MCF 10A (cell line): ENCODE measurements at regions of chr15 and their contacts with region 1.

Region 1: DNA sequence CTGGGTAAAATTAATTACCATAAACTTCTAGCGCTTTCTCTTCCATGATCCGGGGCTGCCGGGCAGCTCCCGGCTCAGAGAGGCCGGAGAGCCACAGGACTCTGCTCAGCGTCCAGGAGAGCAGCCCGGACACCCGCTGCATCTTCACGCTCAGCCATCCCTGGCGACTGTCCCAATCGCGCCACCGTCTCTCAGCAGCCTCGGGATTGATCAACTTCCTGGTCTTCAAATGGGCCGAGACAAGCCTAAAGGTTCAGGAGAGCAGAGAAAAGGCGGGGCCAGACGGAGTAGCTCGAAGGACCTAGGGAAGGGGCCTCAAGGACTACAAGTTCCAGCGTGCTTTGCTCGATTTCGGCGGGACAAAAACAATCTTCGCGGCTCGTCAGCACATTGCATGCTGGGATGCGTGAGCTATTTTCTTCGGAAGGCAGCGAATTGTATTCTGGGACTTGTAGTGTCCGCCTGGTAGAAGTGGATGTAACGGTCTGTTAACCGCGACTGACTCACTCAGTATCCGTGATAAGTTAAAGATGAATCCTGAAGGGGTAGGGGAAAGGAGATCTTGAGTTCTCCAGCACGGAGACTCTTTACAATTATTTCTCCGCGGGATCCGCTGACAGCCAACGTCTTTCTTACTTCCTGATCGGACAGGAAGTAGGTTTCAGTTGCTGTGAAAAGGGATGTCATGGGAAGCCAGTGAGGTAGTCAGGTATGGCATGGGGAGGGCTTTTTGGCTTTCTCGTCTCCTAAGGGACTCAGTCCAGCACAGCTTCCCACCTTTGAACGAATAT is at the start of gene CIAO2A:
- DNase-seq: peak; percentile 99
- H3K4me3 Mint-ChIP-seq: peak within 1 kb of the TSS; percentile 92
- H3K27ac Mint-ChIP-seq: peak within 1 kb of the TSS; percentile 96
- H3K4me1 Mint-ChIP-seq: peaks cover 30% of the 10 kb centered on the region
- H3K27me3 Mint-ChIP-seq: no peaks in the 10 kb centered on the region
- CTCF ChIP-seq: no peak
- total RNA-seq, gene CIAO2A: 38.7 and 44.7 TPM in 2 replicates

Region 2: DNA sequence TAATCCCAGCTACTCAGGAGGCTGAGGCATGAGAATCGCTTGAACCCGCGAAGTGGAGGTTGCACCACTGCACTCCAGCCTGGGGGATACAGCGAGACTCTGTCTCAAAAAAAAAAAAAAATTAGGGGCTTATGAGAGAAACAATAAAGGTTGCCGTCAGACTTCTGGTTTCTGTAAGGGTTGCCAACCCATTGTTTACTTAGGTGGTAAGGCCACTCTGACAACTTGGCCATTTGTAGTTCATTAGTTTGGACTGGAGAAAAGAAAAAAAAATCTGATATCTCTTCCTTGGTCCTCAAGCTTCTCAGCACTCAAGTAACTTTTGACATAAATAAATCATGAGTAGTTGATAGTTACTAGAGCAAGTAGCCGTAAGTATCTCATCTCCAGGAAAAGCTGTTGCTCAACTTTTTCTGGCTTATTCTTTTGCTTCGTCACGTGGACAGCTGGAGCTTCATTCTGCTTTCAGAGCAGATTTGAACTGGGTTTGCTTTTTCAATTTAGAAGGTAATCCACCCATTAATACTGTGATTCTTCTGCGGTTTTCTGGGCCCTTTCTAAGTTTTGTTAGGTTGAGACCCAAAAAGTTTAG is 11.4 kb after region 1 on chr15:
- CTCF ChIA-PET with region 1: interaction called, 14 read pairs
- POLR2A ChIA-PET with region 1: interaction called, 13 read pairs
- intact Hi-C with region 1: no loop called
- DNase-seq: peak; percentile 71
- H3K4me3 Mint-ChIP-seq: no peak overlapping the region
- H3K27ac Mint-ChIP-seq: no peak overlapping the region
- H3K4me1 Mint-ChIP-seq: peaks cover 5% of the 10 kb centered on the region
- H3K27me3 Mint-ChIP-seq: no peaks in the 10 kb centered on the region
- CTCF ChIP-seq: no peak

Region 3: DNA sequence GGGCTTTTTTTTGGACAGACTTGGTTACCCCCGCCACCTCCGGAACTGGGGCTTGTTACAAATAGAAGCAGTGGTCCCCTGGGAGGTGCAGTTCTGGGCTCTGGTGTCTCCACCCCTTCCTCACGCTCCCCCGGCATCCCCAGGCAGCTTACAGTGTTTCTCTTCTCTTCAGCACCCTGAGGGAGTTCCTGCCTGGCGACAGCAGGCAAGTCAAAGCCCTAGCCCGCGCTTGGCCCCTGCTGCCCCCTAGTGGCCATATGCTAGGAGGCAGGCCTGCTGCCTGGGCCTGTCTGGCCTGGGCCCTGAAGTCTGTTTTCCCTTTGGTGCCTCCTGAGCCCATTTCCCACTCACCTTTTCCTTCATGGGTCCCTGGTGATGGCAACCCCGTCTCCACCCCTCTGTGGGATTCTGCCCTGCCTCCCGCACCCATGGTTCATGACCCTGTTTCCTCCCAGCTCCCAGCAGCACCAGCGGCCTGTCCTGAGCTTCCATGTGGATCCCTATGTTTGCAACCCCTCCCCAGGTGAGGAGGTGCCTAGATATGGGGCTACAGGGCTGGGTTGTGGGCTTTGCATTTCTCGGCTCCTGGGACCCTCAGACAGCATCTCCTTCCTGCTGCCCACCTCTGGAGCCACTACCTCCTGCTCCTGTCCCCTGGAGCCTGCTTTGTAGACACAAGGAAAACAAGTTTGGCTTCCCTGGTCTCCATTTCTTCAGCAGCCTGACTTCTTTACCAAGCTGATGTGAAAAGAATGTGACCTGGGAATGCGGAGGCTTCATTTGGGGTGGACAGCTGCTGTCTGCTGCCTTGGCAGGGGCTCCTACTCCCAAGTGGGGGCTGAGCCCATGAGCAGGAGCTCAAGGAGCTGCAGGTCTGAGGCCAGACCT is 59.9 kb after region 1 on chr15:
- CTCF ChIA-PET with region 1: interaction called, 12 read pairs
- POLR2A ChIA-PET with region 1: interaction called, 5 read pairs
- intact Hi-C with region 1: loop called (anchors 2 kb)
- DNase-seq: peak; percentile 85
- H3K4me3 Mint-ChIP-seq: no peak overlapping the region
- H3K27ac Mint-ChIP-seq: no peak overlapping the region
- H3K4me1 Mint-ChIP-seq: peaks cover 15% of the 10 kb centered on the region
- H3K27me3 Mint-ChIP-seq: no peaks in the 10 kb centered on the region
- CTCF ChIP-seq: peak; percentile 97